Caco-2 (cell line): ENCODE measurements at regions of chr5 and their contacts with region 1.

Region 1: GRCh38 chr5:140244525-140245025 is 58.3 kb downstream of the PFDN1 start:
- DNase-seq: peak; percentile 89 to 90
- H3K4me3 ChIP-seq: no peak overlapping the region
- H3K4me3 Mint-ChIP-seq: no peak overlapping the region
- H3K27ac Mint-ChIP-seq: peak overlapping the region; percentile 39
- H3K4me1 ChIP-seq: peaks cover 22% of the 10 kb centered on the region
- H3K4me1 Mint-ChIP-seq: peaks cover 6% of the 10 kb centered on the region
- H3K27me3 ChIP-seq: no peaks in the 10 kb centered on the region
- H3K27me3 Mint-ChIP-seq: no peaks in the 10 kb centered on the region
- CTCF ChIP-seq: peak; percentile 85 to 87

Region 2: DNA sequence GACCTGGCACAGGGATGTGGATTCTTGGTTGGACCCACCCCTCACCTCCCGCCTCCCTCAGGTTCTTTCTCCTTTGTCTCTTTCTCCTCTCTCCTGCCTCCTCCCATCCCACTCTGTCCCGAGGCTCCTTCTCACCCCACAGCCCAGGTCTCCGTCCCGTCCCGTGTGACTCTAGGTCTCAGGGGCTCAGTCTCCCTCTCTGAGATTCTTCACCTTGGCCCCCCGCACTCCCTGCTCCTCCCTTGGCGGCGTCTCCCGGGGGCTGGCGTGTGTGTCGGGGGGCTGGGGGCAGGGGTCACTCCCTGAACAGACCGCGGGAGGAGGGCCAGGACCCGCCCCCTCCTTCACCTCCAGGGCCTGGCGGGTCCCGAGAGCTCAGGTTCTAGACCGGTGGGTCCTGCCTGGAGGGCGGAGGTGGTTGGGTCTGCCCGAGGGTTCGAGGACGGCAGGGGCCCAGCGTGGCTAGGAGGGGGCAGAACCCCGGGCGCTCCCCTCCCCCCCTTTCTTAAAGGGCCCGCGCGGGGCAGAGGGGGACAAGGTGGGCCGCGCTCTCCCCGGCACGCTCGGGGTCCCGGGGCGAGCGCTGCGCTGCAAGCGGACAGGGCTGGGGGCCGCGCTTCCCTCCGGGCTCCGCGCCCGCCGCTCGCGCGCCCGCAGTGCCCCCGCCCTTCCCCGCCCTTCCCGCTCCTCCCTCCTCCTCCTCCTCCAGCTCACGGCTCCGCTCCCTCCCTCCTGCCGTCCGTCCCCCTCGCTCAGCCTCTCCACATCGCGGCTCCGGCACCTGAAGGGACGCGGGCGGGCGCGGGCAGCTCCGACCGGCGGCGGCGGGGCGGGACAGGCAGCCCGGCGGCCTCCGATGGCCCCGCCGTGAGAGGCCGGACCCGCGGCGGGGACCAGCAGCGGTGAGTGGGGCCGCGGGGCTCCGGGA is 449.2 kb before region 1 on chr5 and contains the start of gene PSD2:
- CTCF ChIA-PET with region 1: no interaction called
- POLR2A ChIA-PET with region 1: no interaction called
- intact Hi-C with region 1: no loop called
- DNase-seq: peak in 1 of 2 experiments; percentile 42
- H3K4me3 ChIP-seq: peak within 1 kb of the TSS; percentile 23
- H3K4me3 Mint-ChIP-seq: no peak within 1 kb of the TSS
- H3K27ac Mint-ChIP-seq: no peak within 1 kb of the TSS
- H3K4me1 ChIP-seq: no peaks in the 10 kb centered on the region
- H3K4me1 Mint-ChIP-seq: no peaks in the 10 kb centered on the region
- H3K27me3 ChIP-seq: peaks cover 10% of the 10 kb centered on the region
- H3K27me3 Mint-ChIP-seq: peaks cover 33% of the 10 kb centered on the region
- CTCF ChIP-seq: no peak
- total RNA-seq, gene PSD2: 0.09 and 0.12 TPM in 2 replicates

Region 3: GRCh38 chr5:140174465-140175366 is 69.9 kb before region 1 on chr5 and contains the start of gene CYSTM1:
- CTCF ChIA-PET with region 1: interaction called, 4 read pairs
- POLR2A ChIA-PET with region 1: no interaction called
- intact Hi-C with region 1: loop called (anchors 5 kb)
- DNase-seq: peak; percentile 96 to 99
- H3K4me3 ChIP-seq: peak within 1 kb of the TSS; percentile 74
- H3K4me3 Mint-ChIP-seq: peak within 1 kb of the TSS; percentile 99
- H3K27ac Mint-ChIP-seq: peak within 1 kb of the TSS; percentile 100
- H3K4me1 ChIP-seq: peaks cover 5% of the 10 kb centered on the region; the same call in 1 of the 2 replicates
- H3K4me1 Mint-ChIP-seq: peaks cover 11% of the 10 kb centered on the region
- H3K27me3 ChIP-seq: no peaks in the 10 kb centered on the region
- H3K27me3 Mint-ChIP-seq: no peaks in the 10 kb centered on the region
- CTCF ChIP-seq: no peak
- total RNA-seq, gene CYSTM1: 93.5 and 102 TPM in 2 replicates

Region 4: DNA sequence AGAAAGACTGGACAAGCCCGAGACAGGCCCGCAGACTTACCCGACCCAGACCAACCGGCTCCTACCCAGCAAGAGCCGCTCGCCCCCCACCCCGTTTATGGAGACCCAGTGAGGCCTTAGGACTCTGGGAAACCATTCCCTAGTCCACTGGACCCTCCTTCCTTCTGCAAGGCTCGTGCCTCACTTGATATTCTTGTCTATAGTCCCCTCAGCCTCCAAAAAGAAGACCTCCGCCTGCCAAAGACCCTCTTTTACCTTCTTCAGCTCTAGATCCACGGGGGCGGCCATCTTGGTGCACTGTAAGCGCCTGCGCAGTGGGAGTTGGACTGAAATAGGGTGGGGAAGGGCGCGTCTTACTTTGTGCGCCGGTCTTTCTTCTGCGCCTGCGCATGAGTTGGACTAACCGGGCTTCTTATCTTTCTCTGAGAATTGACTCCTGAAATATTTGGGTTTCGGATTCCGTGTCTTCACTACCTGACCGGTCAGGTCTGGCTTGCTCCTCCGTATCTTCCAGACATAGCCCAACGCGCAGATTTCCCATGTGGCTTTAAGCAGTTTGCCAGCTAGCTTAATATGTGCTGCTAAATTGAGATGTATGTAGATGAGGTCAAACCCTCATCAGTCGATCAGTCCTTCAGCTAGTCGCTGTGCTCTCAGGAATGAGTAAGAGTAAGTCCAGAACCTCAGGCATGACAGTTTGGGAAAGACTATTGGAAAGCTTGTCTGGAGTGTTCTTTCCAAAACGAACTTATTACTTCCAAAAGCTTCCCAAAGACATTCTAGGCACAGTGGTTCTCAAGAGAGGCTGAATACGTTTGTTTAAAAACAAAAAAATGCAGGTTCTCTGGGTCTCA is 58.4 kb after region 1 on chr5 and contains the start of gene PFDN1:
- CTCF ChIA-PET with region 1: interaction called, 10 read pairs
- POLR2A ChIA-PET with region 1: no interaction called
- intact Hi-C with region 1: loop called (anchors 5 kb)
- DNase-seq: peak; percentile 95 to 97
- H3K4me3 ChIP-seq: peak within 1 kb of the TSS; percentile 56
- H3K4me3 Mint-ChIP-seq: peak within 1 kb of the TSS; percentile 100
- H3K27ac Mint-ChIP-seq: peak within 1 kb of the TSS; percentile 100
- H3K4me1 ChIP-seq: peaks cover 19% of the 10 kb centered on the region
- H3K4me1 Mint-ChIP-seq: peaks cover 7% of the 10 kb centered on the region
- H3K27me3 ChIP-seq: no peaks in the 10 kb centered on the region
- H3K27me3 Mint-ChIP-seq: no peaks in the 10 kb centered on the region
- CTCF ChIP-seq: no peak
- total RNA-seq, gene PFDN1: 81.1 and 82.3 TPM in 2 replicates

Region 5: DNA sequence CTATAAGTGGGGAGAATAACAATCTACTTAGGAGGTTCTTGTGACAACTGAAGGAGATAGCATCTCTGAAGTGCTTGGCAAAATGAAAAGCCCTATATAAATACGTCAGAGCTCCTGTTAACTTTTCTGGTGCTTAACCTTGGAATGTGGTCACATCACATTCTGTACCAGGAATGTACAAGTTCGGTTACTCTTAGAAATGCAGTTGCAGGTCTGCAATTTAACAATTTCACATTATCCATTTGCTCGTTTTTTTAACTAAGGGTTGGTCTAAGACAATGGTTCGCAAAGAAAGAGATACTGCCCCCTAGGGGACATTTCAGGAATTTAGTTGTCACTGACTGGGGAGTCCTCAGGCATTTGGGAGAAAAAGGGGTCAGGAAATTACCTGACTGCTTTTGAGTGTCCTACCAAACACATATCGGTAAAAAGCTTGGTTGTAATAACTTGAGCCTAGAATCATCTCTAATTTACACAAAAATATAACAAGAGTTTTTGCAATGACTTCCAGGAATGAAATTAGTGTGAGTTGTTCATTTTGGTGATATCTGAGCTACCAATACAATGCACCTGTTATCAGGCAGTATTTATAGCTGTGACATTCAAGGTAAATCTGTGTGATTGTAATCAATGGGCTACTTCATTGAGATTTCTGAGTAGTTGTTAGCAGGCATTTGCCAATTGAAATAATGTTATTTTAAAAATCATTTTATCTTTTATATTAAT is 107.2 kb after region 1 on chr5:
- CTCF ChIA-PET with region 1: interaction called, 105 read pairs
- POLR2A ChIA-PET with region 1: interaction called, 25 read pairs
- intact Hi-C with region 1: loop called (anchors 1 kb)
- DNase-seq: peak; percentile 62 to 86
- H3K4me3 ChIP-seq: no peak overlapping the region
- H3K4me3 Mint-ChIP-seq: no peak overlapping the region
- H3K27ac Mint-ChIP-seq: no peak overlapping the region
- H3K4me1 ChIP-seq: peaks cover 36% of the 10 kb centered on the region
- H3K4me1 Mint-ChIP-seq: peaks cover 30% of the 10 kb centered on the region
- H3K27me3 ChIP-seq: no peaks in the 10 kb centered on the region
- H3K27me3 Mint-ChIP-seq: no peaks in the 10 kb centered on the region
- CTCF ChIP-seq: peak; percentile 78 to 87

Region 6: GRCh38 chr5:140718241-140718580 is 473.6 kb after region 1 on chr5:
- CTCF ChIA-PET with region 1: no interaction called
- POLR2A ChIA-PET with region 1: no interaction called
- intact Hi-C with region 1: loop called (anchors 5 kb)
- DNase-seq: no peak
- H3K4me3 ChIP-seq: peak overlapping the region; percentile 41
- H3K4me3 Mint-ChIP-seq: peak overlapping the region; percentile 99
- H3K27ac Mint-ChIP-seq: peak overlapping the region; percentile 100
- H3K4me1 ChIP-seq: no peaks in the 10 kb centered on the region
- H3K4me1 Mint-ChIP-seq: peaks cover 15% of the 10 kb centered on the region
- H3K27me3 ChIP-seq: no peaks in the 10 kb centered on the region
- H3K27me3 Mint-ChIP-seq: peaks cover 8% of the 10 kb centered on the region
- CTCF ChIP-seq: no peak